ENCODE measurements at regions of chr1 and their contacts with region 1.

Region 1: GRCh38 chr1:28779751-28780408 is 32.1 kb upstream of the OPRD1 start:
- DNase-seq: no peak
- ATAC-seq: no peak
- H3K4me3 ChIP-seq: no peak overlapping the region
- H3K27ac ChIP-seq: no peak overlapping the region
- H3K4me1 ChIP-seq: peaks cover 2% of the 10 kb centered on the region
- H3K27me3 ChIP-seq: no peaks in the 10 kb centered on the region
- CTCF ChIP-seq: no peak

Region 2: GRCh38 chr1:28877132-28877781 is 97.4 kb after region 1 on chr1:
- intact Hi-C with region 1: loop called (anchors 10 kb)
- DNase-seq: peak; percentile 82
- ATAC-seq: peak; percentile 88 to 89
- H3K4me3 ChIP-seq: no peak overlapping the region
- H3K27ac ChIP-seq: no peak overlapping the region
- H3K4me1 ChIP-seq: peaks cover 6% of the 10 kb centered on the region
- H3K27me3 ChIP-seq: no peaks in the 10 kb centered on the region
- CTCF ChIP-seq: peak; percentile 96

Region 3: GRCh38 chr1:29033829-29034466 is 254.1 kb after region 1 on chr1:
- intact Hi-C with region 1: loop called (anchors 10 kb)
- DNase-seq: no peak
- ATAC-seq: peak; percentile 49 to 56
- H3K4me3 ChIP-seq: no peak overlapping the region
- H3K27ac ChIP-seq: no peak overlapping the region
- H3K4me1 ChIP-seq: no peaks in the 10 kb centered on the region
- H3K27me3 ChIP-seq: no peaks in the 10 kb centered on the region
- CTCF ChIP-seq: peak; percentile 66

Region 4: GRCh38 chr1:29047142-29047541 is 267.3 kb after region 1 on chr1:
- intact Hi-C with region 1: no loop called
- DNase-seq: no peak
- ATAC-seq: no peak
- H3K4me3 ChIP-seq: no peak overlapping the region
- H3K27ac ChIP-seq: no peak overlapping the region
- H3K4me1 ChIP-seq: no peaks in the 10 kb centered on the region
- H3K27me3 ChIP-seq: no peaks in the 10 kb centered on the region
- CTCF ChIP-seq: no peak

Measured in lower lobe of right lung (tissue), 2 donors.